Breast epithelium (tissue), 4 donors: ENCODE measurements at regions of chr11 and their contacts with region 1.

Region 1: GRCh38 chr11:13993096-13993765 is 30.7 kb downstream of the SPON1 start:
- DNase-seq: no peak
- H3K4me3 ChIP-seq: no peak overlapping the region
- H3K27ac ChIP-seq: no peak overlapping the region
- H3K4me1 ChIP-seq: no peaks in the 10 kb centered on the region
- H3K27me3 ChIP-seq: no peaks in the 10 kb centered on the region
- CTCF ChIP-seq: no peak
- POLR2A ChIP-seq: no peak

Region 2: DNA sequence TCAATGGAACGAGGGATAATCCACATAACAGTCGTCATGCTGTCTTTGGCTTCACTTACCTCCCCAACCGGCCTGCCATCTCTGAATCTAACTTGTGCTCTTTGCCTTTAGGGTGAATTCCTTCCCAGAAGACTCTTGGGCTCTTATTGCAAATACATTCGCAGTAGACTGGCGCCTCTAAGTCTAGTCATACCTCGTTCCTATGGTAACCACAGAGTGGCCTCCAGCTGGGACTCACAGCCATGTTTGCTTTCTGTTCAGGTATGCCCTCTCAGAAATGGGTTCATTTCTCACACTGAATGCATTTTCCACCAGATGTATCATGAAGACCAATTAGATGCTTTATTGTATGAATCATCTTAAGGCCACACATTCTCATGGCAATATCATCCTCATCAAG is 212.1 kb before region 1 on chr11:
- intact Hi-C with region 1: no loop called
- DNase-seq: no peak
- H3K4me3 ChIP-seq: no peak overlapping the region
- H3K27ac ChIP-seq: no peak overlapping the region
- H3K4me1 ChIP-seq: no peaks in the 10 kb centered on the region
- H3K27me3 ChIP-seq: no peaks in the 10 kb centered on the region
- CTCF ChIP-seq: no peak
- POLR2A ChIP-seq: no peak

Region 3: DNA sequence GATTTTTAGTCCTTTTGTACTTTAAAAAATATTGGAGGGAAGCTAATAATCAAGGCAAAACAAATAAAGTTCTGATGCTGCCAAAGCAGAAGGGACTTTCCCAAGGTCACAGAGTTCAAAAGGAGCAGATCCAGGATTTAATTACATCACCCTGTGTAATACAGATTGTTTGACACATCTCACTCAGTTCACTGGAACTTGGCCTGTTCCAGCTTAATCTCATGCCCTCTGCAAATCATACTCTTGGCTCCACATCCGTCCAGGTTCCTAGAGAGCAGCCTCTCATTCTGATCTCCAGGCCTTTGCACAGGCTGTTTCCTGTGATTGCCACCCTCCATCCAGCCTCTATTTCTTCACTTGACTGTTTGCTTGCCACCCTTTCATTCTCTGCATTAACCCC is 121.0 kb after region 1 on chr11:
- intact Hi-C with region 1: no loop called
- DNase-seq: no peak
- H3K4me3 ChIP-seq: no peak overlapping the region
- H3K27ac ChIP-seq: no peak overlapping the region
- H3K4me1 ChIP-seq: no peaks in the 10 kb centered on the region
- H3K27me3 ChIP-seq: no peaks in the 10 kb centered on the region
- CTCF ChIP-seq: no peak
- POLR2A ChIP-seq: no peak

Region 4: DNA sequence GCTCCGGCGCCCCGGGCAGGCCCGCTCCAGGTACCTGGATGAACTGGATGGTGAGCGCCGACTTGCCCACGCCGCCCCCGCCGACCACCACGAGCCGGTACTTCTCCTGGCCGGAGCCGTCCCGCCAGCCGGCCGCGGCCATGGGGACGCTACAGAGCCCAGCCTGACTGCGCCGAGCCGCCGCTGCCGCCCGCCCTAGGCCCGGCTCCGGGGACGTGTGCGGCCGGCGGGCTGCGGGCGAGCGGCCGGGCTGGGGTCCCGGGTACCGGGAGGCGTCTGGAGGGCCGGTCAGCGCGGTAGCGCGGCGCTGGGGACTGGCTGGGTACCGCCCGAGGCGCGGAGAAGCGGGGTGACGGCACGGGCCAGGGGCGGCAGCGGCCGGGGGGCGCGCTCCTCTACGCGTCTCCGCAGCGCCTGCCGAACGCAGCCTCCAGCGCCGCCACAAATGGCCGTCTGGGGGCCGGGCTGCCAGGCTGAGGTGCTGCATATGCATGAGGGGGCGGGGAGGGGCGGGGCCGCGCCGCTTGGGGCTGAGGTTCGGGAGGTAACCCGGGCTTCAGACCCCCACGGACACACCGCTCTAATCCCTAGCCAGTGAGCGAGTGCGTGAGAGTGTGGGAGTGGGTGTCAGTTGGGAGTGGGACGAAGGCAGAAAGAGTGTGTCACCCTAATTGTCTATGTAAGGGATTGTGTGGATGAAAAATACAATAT is 365.7 kb after region 1 on chr11 and contains the start of gene RRAS2:
- intact Hi-C with region 1: loop called (anchors 5 kb)
- DNase-seq: peak; percentile 56 to 70
- H3K4me3 ChIP-seq: peak within 1 kb of the TSS; percentile 71 to 89 (median 86)
- H3K27ac ChIP-seq: peak within 1 kb of the TSS; percentile 86 to 91
- H3K4me1 ChIP-seq: no peaks in the 10 kb centered on the region
- H3K27me3 ChIP-seq: no peaks in the 10 kb centered on the region
- CTCF ChIP-seq: no peak
- POLR2A ChIP-seq: no peak
- total RNA-seq, gene RRAS2: 37.4 to 58.1 (median 46.4) TPM

Region 5: GRCh38 chr11:15602785-15603567 is 1609.7 kb after region 1 on chr11:
- intact Hi-C with region 1: no loop called
- DNase-seq: no peak
- H3K4me3 ChIP-seq: no peak overlapping the region
- H3K27ac ChIP-seq: no peak overlapping the region
- H3K4me1 ChIP-seq: no peaks in the 10 kb centered on the region
- H3K27me3 ChIP-seq: no peaks in the 10 kb centered on the region
- CTCF ChIP-seq: no peak
- POLR2A ChIP-seq: no peak